Lower leg skin (tissue), 4 donors: ENCODE measurements at regions of chr20 and their contacts with region 1.

Region 1: GRCh38 chr20:956330-956951 is 40.3 kb upstream of the ANGPT4 start:
- DNase-seq: peak; percentile 46 to 90
- H3K4me3 ChIP-seq: no peak overlapping the region
- CTCF ChIP-seq: peak in 1 of 3 donors; percentile 74
- POLR2A ChIP-seq: no peak

Region 2: DNA sequence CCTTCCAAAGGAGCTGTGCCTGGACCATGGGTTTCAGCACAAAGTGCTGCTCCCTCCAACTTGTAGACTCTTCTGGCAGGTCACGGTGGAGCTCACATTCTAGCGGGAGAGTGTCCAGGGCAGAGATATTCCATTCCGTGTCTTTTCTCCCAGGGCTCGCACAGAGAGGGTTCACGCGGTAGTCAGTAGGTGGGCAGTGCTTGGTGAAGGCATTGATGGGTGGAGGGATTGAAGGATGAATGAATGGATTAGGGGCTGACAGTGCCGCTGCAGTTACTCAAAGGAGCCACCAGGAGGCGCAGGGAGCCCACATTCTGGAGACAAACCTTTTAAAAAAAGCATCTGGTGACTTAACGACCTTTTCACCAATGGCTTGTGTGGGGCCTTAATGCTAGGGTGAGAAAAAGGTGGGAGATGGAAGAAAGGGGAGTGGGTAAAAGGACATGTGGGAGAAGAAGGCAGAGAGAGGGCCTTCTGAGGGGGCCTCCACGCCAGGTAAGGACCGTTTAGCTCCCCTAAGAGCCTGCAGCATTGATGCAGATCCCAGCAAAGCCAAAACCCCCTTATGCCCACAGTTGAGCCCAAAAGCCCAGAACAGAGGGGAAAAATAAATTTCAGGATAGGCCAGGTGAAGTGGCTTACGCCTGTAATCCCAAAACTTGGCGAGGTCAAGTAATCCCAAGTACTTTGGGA is 140.4 kb before region 1 on chr20:
- intact Hi-C with region 1: loop called (anchors 1 kb)
- DNase-seq: peak in 1 of 2 donors; percentile 93
- H3K4me3 ChIP-seq: no peak overlapping the region
- CTCF ChIP-seq: peak in 1 of 3 donors; percentile 87
- POLR2A ChIP-seq: no peak

Region 3: DNA sequence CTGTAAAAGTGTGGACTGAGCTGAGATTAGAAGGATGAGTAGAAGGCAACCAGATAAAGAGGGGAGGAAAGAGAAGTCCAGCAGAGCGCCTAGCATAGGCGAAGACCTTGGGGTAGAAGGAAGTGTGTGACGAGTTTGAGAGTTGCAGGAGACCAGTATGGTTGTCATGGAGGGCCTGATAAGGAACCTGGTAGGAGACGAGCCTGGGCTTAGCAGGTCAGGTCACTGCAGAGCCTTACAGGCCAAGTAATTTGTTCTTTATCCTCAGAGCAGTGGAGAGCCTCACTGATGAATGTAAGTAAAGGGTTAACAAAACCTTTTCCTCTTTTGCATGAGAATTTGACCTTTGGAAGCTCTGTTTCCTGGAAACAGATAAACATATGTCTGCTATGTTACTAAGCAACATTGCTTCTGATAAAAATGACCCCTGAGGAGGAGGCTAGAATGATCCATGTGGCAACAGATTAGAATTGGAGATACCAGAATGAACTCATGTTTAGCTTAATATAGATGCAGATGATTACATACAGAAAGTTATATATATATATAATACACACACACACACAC is 231.2 kb after region 1 on chr20:
- intact Hi-C with region 1: no loop called
- DNase-seq: no peak
- H3K4me3 ChIP-seq: no peak overlapping the region
- CTCF ChIP-seq: no peak
- POLR2A ChIP-seq: no peak